ENCODE measurements at regions of chr6 and their contacts with region 1.

Region 1: GRCh38 chr6:30717042-30717844 is at the start of gene MDC1:
- DNase-seq: peak; percentile 92 to 99
- H3K4me3 ChIP-seq: peak within 1 kb of the TSS; percentile 63 to 100 (median 82)
- H3K27ac ChIP-seq: peak within 1 kb of the TSS; percentile 94
- H3K4me1 ChIP-seq: peaks cover 0 to 2% (median 0%) of the 10 kb centered on the region in 4 experiments; a peak in 6 of 7 replicates
- H3K27me3 ChIP-seq: no peaks in the 10 kb centered on the region
- CTCF ChIP-seq: peak in 1 of 3 experiments; percentile 15; a peak in 1 of 4 replicates
- EP300 ChIP-seq: peak in 1 of 2 experiments; percentile 91; a peak in 2 of 3 replicates
- POLR2A ChIP-seq: peak; percentile 90 to 97
- RAD21 ChIP-seq: peak in 1 of 2 experiments; percentile 15; a peak in 1 of 4 replicates
- total RNA-seq, gene MDC1: 68.0 and 81.1 TPM in 2 replicates

Region 2: DNA sequence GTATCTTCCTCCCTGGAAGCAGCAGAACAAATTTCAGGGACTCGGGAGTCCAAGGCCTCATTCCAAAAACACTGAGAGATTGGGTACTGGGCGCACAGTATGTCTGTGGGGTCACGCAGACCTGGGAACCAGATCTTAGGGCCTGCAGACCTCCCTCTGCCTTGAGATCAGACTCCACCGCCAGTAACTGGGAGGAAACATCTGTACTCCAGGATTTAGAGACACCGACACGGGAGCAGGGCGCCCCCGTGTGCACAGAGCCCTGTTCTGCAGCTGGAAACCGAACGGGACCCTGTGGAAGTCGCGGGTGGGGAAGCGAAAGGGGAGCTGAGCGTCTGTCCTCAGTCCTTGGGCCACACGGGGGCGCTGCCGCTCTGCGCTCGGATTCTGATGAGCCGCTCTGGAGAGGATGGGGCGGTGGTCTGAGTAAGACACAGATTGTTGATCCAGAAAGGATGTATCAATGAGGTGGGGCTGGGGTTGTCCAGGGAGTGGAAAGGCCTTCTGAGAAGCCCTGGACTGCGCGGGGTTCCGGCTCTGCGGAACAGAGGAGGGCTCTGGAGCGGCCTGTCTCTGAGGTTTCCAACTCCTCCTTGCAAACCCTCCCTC is 263.6 kb before region 1 on chr6:
- CTCF ChIA-PET with region 1: no interaction called
- POLR2A ChIA-PET with region 1: no interaction called
- DNase-seq: peak; percentile 84 to 99
- H3K4me3 ChIP-seq: no peak overlapping the region
- H3K27ac ChIP-seq: no peak overlapping the region
- H3K4me1 ChIP-seq: peaks cover 0 to 3% (median under 1%) of the 10 kb centered on the region in 4 experiments; a peak in 3 of 7 replicates
- H3K27me3 ChIP-seq: peaks cover 0 to 36% (median 23%) of the 10 kb centered on the region in 4 experiments; a peak in 6 of 7 replicates
- CTCF ChIP-seq: peak; percentile 93 to 97 (median 94)
- EP300 ChIP-seq: no peak
- POLR2A ChIP-seq: no peak
- RAD21 ChIP-seq: peak; percentile 75 to 83

Region 3: DNA sequence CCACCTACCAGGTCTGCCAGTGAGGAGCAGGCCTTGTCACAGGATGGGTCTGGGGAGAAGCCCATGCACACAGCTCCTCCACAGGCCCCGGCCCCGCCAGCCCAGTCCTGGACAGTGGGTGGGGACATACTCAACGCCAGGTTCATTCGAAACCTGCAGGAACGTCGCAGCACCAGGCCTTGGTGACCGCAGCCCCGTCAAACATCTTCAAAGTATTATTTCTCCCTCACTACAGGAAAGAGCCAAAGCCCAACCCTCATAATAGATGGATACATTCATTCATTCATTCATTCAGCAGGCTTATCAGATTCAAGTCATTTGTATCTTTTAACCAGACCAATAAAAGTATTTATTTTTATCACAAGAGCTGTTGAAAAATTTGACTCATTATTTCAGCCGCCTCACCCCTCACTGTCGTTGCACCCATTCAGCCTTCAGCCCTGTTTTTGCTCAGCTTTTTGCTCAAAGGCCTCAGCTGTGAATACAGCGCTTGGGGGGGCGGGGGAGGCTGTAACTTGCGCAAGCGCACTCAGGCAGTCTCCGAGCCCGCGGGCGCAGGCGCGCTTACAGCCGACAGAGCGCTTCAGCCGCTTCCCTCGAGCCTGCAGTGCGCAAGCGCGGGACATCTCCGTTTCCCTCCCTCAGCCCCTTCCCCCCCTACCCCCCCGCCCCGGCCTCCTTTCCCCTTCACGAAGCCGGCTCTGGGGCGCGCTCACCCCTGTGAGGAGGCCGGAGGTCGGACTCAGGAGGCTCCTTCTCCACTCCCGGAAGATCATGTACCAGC is 70.6 kb before region 1 on chr6 and contains the start of gene C6orf136:
- CTCF ChIA-PET with region 1: interaction called, 4 read pairs
- POLR2A ChIA-PET with region 1: interaction called, 17 read pairs
- DNase-seq: peak; percentile 75 to 87
- H3K4me3 ChIP-seq: peak within 1 kb of the TSS; percentile 74 to 91 (median 85)
- H3K27ac ChIP-seq: peak within 1 kb of the TSS; percentile 66
- H3K4me1 ChIP-seq: peaks cover 0 to 6% (median 4%) of the 10 kb centered on the region in 4 experiments; a peak in 5 of 7 replicates
- H3K27me3 ChIP-seq: no peaks in the 10 kb centered on the region
- CTCF ChIP-seq: no peak
- EP300 ChIP-seq: no peak
- POLR2A ChIP-seq: no peak
- RAD21 ChIP-seq: no peak
- total RNA-seq, gene C6orf136: 18.2 and 20.8 TPM in 2 replicates

Region 4: GRCh38 chr6:30678964-30679726 is 38.1 kb before region 1 on chr6:
- CTCF ChIA-PET with region 1: interaction called, 54 read pairs
- POLR2A ChIA-PET with region 1: interaction called, 388 read pairs
- DNase-seq: peak in 1 of 2 experiments; percentile 98
- H3K4me3 ChIP-seq: peak overlapping the region in 1 of 4 experiments; percentile 50; a peak in 4 of 8 replicates
- H3K27ac ChIP-seq: no peak overlapping the region
- H3K4me1 ChIP-seq: peaks cover 7 to 17% (median 12%) of the 10 kb centered on the region in 4 experiments
- H3K27me3 ChIP-seq: no peaks in the 10 kb centered on the region
- CTCF ChIP-seq: peak in 2 of 3 experiments; percentile 96 to 97; a peak in 3 of 4 replicates
- EP300 ChIP-seq: no peak; a peak in 1 of 3 replicates
- POLR2A ChIP-seq: no peak
- RAD21 ChIP-seq: peak; percentile 91 to 96

Region 5: GRCh38 chr6:30730601-30731435 is 13.6 kb after region 1 on chr6:
- CTCF ChIA-PET with region 1: interaction called, 61 read pairs
- POLR2A ChIA-PET with region 1: interaction called, 732 read pairs
- DNase-seq: peak in 1 of 2 experiments; percentile 87
- H3K4me3 ChIP-seq: no peak overlapping the region
- H3K27ac ChIP-seq: no peak overlapping the region
- H3K4me1 ChIP-seq: no peaks in the 10 kb centered on the region
- H3K27me3 ChIP-seq: no peaks in the 10 kb centered on the region
- CTCF ChIP-seq: peak; percentile 71 to 78 (median 73)
- EP300 ChIP-seq: no peak
- POLR2A ChIP-seq: no peak
- RAD21 ChIP-seq: peak; percentile 79 to 85

Region 6: GRCh38 chr6:30883685-30884520 is 166.7 kb after region 1 on chr6 and contains the start of gene DDR1:
- CTCF ChIA-PET with region 1: interaction called, 11 read pairs
- POLR2A ChIA-PET with region 1: interaction called, 9 read pairs
- DNase-seq: peak in 1 of 2 experiments; percentile 76
- H3K4me3 ChIP-seq: peak within 1 kb of the TSS; percentile 57 to 86 (median 80)
- H3K27ac ChIP-seq: peak within 1 kb of the TSS; percentile 86
- H3K4me1 ChIP-seq: peaks cover 12 to 52% (median 37%) of the 10 kb centered on the region in 4 experiments
- H3K27me3 ChIP-seq: no peaks in the 10 kb centered on the region
- CTCF ChIP-seq: no peak
- EP300 ChIP-seq: no peak
- POLR2A ChIP-seq: no peak
- RAD21 ChIP-seq: no peak
- total RNA-seq, gene DDR1: 181 and 182 TPM in 2 replicates